HEK293 (cell line): ENCODE measurements at regions of chr1 and their contacts with region 1.

Region 1: GRCh38 chr1:169794530-169795416 is at the start of gene METTL18:
- H3K4me3 ChIP-seq: peak within 1 kb of the TSS; percentile 70
- H3K27ac ChIP-seq: peak within 1 kb of the TSS; percentile 83
- H3K4me1 ChIP-seq: no peaks in the 10 kb centered on the region
- CTCF ChIP-seq: peak; percentile 24; the same call in 1 of the 2 replicates

Region 2: DNA sequence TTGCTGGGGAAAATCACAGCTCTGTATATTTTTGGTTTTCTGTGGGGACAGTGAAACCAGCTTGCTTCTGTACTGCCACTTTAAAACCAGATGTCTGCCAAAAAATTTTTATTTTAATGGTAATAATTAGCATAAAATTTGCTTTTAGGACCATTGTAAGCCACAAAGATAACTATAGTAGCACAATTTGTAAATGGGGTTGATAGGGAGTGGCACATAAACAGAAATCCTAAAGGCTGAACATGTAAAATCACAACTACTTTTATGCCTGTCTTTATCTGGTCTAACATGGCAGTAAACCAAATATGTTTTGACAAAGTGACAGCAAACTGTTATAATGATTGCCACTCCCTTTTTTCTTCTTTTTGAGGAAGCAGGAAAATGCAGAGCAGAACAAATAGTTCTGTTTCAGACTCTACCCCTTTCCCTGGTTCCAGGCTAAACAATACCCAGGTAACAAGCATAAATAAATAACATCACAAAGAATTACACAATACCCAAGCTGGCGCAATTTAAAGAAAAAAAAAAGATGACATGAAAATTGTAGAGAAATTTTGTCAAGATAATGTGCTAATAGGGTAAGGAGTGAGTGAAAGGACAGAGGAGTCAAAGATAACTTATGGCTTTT is 343.4 kb before region 1 on chr1:
- CTCF ChIA-PET with region 1: no interaction called
- POLR2A ChIA-PET with region 1: no interaction called
- H3K4me3 ChIP-seq: no peak overlapping the region
- H3K27ac ChIP-seq: no peak overlapping the region
- H3K4me1 ChIP-seq: no peaks in the 10 kb centered on the region
- CTCF ChIP-seq: no peak

Region 3: GRCh38 chr1:169782602-169783001 is 12.2 kb before region 1 on chr1:
- CTCF ChIA-PET with region 1: interaction called, 3 read pairs
- POLR2A ChIA-PET with region 1: interaction called, 10 read pairs
- H3K4me3 ChIP-seq: no peak overlapping the region
- H3K27ac ChIP-seq: no peak overlapping the region
- H3K4me1 ChIP-seq: no peaks in the 10 kb centered on the region
- CTCF ChIP-seq: no peak

Region 4: DNA sequence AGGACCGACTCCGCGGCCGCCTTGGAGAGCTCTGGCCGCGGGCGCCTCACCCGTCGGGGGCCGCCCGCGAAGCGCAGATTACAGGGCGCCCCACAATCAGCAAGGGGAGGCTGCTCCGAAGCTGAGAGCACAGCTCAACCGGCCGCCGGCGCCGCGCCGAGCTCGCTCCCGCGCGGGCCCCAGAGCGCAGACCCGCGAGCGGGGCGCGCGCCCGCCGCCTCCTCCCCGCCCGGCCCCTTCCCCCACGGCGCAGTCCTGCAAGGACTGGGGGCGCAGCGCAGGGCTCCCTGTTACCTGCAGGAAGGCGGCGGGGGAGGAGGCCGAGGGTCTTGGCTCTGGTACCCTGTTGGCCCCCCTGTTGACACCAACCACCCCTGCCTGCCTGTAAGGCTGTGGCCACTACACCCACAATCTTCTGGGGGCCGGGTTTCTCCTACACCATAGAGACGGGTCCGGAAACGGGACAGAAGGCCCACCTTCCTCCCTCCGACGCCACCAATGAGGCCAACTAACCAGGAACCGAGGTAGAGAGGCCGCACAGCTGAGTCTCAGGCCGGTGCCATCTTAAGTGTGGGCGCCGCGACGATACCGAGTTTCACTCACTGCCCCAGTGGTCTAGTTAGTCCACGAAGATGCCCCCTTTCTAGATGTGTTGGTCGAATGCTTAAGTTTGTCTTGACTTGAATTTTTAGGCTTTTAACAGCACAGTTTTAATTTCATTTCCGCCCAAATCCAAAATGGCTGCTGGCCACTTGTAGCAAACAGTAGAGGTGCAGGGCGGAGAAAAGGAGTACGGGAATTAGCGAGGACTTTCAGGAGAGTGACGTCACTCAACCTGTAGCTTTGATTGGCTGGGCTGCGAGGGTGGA is 99.0 kb after region 1 on chr1 and contains the start of gene SCYL3:
- CTCF ChIA-PET with region 1: no interaction called
- POLR2A ChIA-PET with region 1: interaction called, 16 read pairs
- H3K4me3 ChIP-seq: peak within 1 kb of the TSS; percentile 91
- H3K27ac ChIP-seq: peak within 1 kb of the TSS; percentile 92
- H3K4me1 ChIP-seq: peaks cover 17% of the 10 kb centered on the region
- CTCF ChIP-seq: peak; percentile 13; the same call in 1 of the 2 replicates

Region 5: GRCh38 chr1:169949139-169949538 is 154.4 kb after region 1 on chr1:
- CTCF ChIA-PET with region 1: no interaction called
- POLR2A ChIA-PET with region 1: no interaction called
- H3K4me3 ChIP-seq: no peak overlapping the region
- H3K27ac ChIP-seq: no peak overlapping the region
- H3K4me1 ChIP-seq: 0 out of 2 replicates have a peak, but pooled peaks cover 4% of the 10 kb centered on the region
- CTCF ChIP-seq: no peak